Ascending aorta (tissue), 2 donors: ENCODE measurements at regions of chr1 and their contacts with region 1.

Region 1: GRCh38 chr1:94335950-94336349 is 82.2 kb upstream of the ABCD3 start:
- DNase-seq: peak in 1 of 2 donors; percentile 89
- H3K4me3 ChIP-seq: no peak overlapping the region
- H3K27ac ChIP-seq: no peak overlapping the region
- H3K4me1 ChIP-seq: no peaks in the 10 kb centered on the region
- H3K27me3 ChIP-seq: no peaks in the 10 kb centered on the region
- CTCF ChIP-seq: peak; percentile 86 to 94 (median 94)

Region 2: GRCh38 chr1:93909146-93910050 is 426.6 kb before region 1 on chr1 and contains the start of gene GCLM:
- intact Hi-C with region 1: loop called (anchors 10 kb)
- DNase-seq: peak; percentile 79 to 97
- H3K4me3 ChIP-seq: peak within 1 kb of the TSS; percentile 92 to 96
- H3K27ac ChIP-seq: peak within 1 kb of the TSS; percentile 82 to 89
- H3K4me1 ChIP-seq: peaks cover 0 to 7% of the 10 kb centered on the region in 2 donors
- H3K27me3 ChIP-seq: no peaks in the 10 kb centered on the region
- CTCF ChIP-seq: peak; percentile 67 to 95 (median 80)
- total RNA-seq, gene GCLM: 3.3 TPM

Region 3: DNA sequence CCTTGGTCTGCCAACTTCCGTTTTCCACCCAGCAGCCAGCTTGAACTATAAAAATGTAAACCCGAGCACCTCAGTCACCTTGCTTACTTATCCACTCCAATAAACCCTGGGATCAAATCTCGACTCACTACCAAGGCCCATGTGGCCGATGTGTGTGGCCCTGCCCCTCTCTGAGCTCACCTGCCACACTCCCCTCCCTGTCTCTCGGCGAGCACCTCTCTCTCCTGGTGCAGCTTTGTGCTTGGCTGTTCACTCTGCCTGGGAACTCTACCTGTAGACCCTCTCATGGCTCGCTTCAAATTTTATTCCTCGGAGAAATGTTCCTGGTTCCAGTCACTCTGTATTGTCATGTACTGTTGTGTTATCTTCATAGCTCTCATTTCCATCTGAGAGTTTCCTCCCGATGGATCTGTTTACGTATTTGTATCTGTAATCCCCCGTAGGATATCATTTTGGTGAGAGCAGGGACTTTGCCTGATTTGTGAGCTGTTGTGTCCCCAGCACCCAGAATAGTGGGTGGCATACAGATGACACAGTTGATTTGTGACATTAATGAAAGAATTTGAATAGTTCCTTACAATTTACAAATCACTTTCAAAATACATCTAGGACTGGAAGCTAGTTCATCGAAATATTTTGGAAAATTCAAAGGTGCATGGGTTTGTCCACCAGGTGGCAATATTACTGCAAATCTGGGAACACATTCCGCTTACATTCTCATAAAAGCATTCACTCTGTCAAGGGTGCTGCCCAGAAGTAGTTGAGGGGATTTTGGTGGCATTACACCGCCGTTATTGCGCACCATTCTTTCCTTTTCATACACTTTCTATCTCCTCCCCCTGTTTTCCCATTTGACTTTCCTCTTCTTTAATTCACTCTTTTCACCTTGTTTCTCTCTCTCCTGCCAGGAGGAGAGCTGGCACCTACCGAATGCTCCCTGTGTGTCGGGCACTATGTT is 310.3 kb before region 1 on chr1:
- intact Hi-C with region 1: loop called (anchors 1 kb)
- DNase-seq: no peak
- H3K4me3 ChIP-seq: no peak overlapping the region
- H3K27ac ChIP-seq: no peak overlapping the region
- H3K4me1 ChIP-seq: peaks cover 0 to 5% of the 10 kb centered on the region in 2 donors
- H3K27me3 ChIP-seq: no peaks in the 10 kb centered on the region
- CTCF ChIP-seq: peak; percentile 28 to 70 (median 64)

Region 4: DNA sequence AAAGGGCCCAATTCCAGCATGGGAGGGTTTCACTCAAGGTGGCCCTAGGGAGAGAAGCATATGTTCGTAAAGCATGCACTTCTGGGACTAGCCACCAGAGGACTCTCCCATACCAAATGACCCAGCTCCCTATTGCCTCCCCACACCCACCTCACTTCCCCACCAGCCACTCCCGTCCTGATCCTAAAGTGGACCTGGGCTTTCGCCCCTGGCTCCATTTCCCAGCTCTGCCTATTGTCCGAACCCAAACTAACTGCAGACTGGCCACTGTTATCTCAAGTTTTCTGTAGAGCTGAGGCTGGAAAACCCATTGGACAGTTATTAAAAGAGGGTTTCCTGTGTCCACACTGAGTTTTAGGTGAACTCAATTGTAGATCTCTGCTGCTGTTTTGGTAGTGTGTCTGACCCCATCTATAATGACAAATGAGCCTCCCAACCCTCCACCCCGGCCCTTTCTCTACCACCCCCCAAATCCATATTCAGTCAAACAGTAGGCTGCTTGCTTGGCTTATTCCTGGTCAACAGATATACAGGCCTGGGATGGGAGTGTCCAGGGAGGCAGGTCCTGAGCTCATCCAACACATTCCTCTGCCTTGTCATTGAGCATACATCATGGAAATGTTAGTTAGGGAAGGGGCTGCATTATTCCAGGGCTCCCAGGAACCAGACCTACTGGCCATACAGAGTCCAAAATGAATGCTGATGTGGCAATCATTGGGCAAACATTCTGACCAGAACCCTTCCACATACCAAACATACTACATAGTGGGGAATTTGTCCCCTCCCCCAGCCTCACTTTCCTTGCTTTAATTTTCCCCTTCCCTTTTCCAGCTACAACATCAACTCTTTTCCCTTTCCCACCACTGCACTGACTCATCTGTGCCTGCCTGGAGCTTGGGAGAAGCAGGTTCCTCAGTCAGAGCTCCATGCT is 274.2 kb before region 1 on chr1:
- intact Hi-C with region 1: loop called (anchors 1 kb)
- DNase-seq: peak in 1 of 2 donors; percentile 85
- H3K4me3 ChIP-seq: no peak overlapping the region
- H3K27ac ChIP-seq: peak overlapping the region in 1 of 2 donors; percentile 18
- H3K4me1 ChIP-seq: peaks cover 0 to 6% of the 10 kb centered on the region in 2 donors
- H3K27me3 ChIP-seq: no peaks in the 10 kb centered on the region
- CTCF ChIP-seq: peak; percentile 84 to 93 (median 86)

Region 5: DNA sequence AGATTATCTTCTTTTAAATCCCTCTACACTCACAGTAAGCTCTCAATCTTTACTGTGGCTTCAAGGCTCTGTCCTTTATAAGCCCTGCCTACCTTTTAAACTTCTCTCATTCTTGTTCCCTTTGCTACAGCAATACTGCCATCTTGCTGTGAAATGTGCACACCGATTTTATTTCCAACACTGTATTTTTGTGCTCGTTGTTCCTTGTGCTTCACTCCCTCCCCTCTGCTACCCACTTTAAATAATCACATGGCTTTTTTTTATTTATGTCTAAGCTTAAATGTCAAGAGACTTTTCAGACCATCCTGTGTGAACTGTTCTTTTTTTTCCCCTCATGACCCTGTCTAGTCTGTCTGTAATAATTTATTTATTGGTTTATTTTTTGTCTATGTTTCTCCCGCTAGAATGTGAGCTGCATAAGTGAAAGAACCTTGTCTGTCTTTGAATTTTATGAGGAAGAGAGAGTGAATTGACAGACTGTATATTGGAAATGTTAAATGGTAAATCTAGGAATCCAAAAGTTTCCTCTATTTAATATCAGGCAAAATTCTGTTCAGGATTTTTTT is 127.9 kb after region 1 on chr1:
- intact Hi-C with region 1: loop called (anchors 5 kb)
- DNase-seq: no peak
- H3K4me3 ChIP-seq: no peak overlapping the region
- H3K27ac ChIP-seq: no peak overlapping the region
- H3K4me1 ChIP-seq: no peaks in the 10 kb centered on the region
- H3K27me3 ChIP-seq: no peaks in the 10 kb centered on the region
- CTCF ChIP-seq: peak; percentile 7 to 51 (median 12)